ENCODE measurements at regions of chr3 and their contacts with region 1.

Region 1: GRCh38 chr3:115692887-115693524 is 69.7 kb downstream of the GAP43 start:
- DNase-seq: peak; percentile 74
- ATAC-seq: peak; percentile 84
- H3K4me3 Mint-ChIP-seq: no peak overlapping the region
- H3K27ac Mint-ChIP-seq: no peak overlapping the region
- H3K4me1 Mint-ChIP-seq: peaks cover 3% of the 10 kb centered on the region
- H3K27me3 Mint-ChIP-seq: peaks cover 13% of the 10 kb centered on the region

Region 2: GRCh38 chr3:115092220-115092791 is 600.7 kb before region 1 on chr3:
- CTCF ChIA-PET with region 1: interaction called, 10 read pairs
- POLR2A ChIA-PET with region 1: no interaction called
- DNase-seq: peak; percentile 70
- ATAC-seq: peak; percentile 51
- H3K4me3 Mint-ChIP-seq: no peak overlapping the region
- H3K27ac Mint-ChIP-seq: no peak overlapping the region
- H3K4me1 Mint-ChIP-seq: no peaks in the 10 kb centered on the region
- H3K27me3 Mint-ChIP-seq: no peaks in the 10 kb centered on the region

Region 3: DNA sequence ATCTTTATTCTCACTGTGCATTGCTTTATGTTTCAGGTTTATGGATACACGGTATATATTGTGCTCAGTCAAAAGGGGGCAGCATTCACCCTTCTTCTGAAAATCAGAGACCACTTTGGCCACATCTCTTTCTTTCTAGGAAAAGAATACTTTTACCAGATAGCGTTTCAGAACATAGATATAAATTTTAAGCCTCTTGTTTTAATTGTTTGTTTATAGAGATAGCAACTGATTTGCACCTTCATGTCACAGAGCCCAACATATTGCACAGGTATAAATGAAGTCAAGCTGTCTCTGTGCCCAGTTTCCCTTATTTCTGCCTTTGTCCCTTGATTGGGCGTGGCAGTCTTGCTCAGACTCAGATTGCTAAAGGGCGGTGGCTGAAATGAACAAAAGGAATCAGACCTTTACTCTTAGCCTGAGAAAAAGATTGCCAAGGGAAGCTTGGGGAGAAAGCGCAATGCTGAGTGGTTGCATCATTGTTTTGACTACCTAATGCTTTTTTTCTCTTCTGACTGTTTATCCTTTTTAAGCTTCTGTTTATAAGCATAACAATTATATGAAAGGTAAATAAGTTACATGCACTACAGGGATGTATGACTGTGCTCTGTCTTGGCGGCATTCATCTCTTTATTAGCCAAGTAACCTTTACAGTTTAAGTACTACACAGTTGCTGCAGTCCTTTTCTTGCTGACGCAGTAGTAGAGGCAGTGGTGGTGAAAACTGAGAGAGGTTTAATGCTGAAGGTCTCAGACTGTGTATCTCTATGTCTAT is 475.1 kb before region 1 on chr3:
- CTCF ChIA-PET with region 1: interaction called, 14 read pairs
- POLR2A ChIA-PET with region 1: no interaction called
- DNase-seq: peak; percentile 37
- ATAC-seq: no peak
- H3K4me3 Mint-ChIP-seq: no peak overlapping the region
- H3K27ac Mint-ChIP-seq: no peak overlapping the region
- H3K4me1 Mint-ChIP-seq: no peaks in the 10 kb centered on the region
- H3K27me3 Mint-ChIP-seq: peaks cover 6% of the 10 kb centered on the region

Region 4: DNA sequence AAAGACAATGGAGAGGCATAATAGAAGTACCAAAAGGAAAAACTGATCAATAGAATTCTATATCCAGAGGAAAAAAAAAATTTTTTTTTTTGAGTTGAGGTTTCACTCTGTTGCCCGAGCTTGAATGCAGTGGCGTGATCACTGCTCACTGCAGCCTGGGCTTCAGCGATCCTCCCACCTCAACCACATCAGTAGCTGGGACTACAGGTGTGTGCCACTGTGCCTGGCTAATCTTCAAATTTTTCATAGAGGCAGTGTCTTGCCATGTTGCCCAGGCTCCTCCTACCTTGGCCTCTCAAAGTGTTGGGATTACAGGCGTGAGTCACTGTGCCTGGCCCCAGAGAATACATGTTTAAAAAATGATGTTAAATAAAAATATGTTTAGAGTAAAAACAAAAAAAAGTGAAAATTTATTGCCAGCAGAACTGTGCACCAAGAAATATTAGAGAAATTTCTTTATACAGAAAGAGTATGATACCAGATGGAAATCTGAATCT is 391.6 kb before region 1 on chr3:
- CTCF ChIA-PET with region 1: no interaction called
- POLR2A ChIA-PET with region 1: no interaction called
- DNase-seq: no peak
- ATAC-seq: no peak
- H3K4me3 Mint-ChIP-seq: no peak overlapping the region
- H3K27ac Mint-ChIP-seq: no peak overlapping the region
- H3K4me1 Mint-ChIP-seq: no peaks in the 10 kb centered on the region
- H3K27me3 Mint-ChIP-seq: no peaks in the 10 kb centered on the region

Region 5: DNA sequence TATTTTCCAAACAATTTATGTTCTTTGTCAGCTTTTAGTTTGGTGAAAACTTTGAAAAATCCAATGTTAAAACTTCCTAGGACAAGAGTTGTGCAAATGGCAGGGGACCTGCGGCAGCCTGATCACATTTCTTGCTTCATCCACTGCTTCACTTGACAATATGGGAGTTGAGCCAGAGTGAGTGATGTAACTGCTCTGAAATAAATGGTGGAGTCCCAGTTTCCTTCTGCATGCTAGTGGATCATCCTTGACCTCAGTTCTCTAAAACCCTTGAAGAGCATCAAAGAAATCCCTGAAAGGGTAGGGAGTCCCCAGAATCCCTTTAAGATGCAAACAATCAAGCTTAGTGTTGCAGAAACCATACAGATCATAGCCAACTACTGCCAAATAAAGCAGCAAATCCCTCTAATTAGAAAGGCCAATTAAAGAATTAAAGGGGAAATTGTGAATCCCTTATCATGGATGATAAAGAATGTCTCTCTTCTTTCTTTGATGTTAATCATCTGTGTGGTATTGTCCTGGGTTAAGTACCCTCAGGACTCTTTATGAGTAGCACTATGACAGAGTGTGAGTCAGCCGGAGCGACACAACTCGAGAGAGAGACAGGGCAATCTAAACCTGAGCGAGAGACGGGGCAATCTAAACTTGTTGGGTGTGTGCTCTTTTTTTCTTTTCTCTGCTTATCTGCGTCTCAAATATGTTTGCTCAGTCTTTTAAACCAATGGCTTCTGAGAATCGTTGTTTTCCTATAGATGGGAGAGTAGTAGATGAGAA is 111.5 kb before region 1 on chr3:
- CTCF ChIA-PET with region 1: no interaction called
- POLR2A ChIA-PET with region 1: no interaction called
- DNase-seq: no peak
- ATAC-seq: no peak
- H3K4me3 Mint-ChIP-seq: no peak overlapping the region
- H3K27ac Mint-ChIP-seq: no peak overlapping the region
- H3K4me1 Mint-ChIP-seq: no peaks in the 10 kb centered on the region
- H3K27me3 Mint-ChIP-seq: peaks cover 7% of the 10 kb centered on the region